ENCODE measurements at regions of chr12 and their contacts with region 1.

Region 1: DNA sequence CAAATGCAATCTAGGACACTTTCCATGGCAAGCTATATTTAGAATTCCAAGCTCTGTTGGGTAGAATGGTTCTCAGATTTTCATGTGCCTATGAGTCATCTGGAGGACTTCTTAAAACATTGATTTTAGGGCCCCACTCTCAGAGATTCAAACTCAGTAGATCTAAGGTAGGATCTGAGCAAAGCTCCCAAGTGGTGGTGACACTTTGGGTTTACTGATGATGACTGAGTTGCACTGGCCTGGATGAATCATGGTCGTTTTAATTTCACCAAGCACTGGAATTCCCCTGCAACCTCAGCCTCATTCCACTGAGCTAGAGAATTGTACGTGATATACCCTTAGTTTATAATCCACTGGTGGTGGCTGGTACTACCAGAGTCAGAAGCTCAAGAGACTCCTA is 86.5 kb downstream of the PPM1H start:
- DNase-seq: peak; percentile 85
- ATAC-seq: peak; percentile 88
- H3K4me3 ChIP-seq: no peak overlapping the region
- H3K27ac ChIP-seq: no peak overlapping the region
- H3K4me1 ChIP-seq: peaks cover 4% of the 10 kb centered on the region; the same call in 1 of the 2 replicates
- H3K27me3 ChIP-seq: no peaks in the 10 kb centered on the region; the same call in 1 of the 2 replicates
- CTCF ChIP-seq: peak; percentile 13; the same call in 1 of the 2 replicates
- POLR2A ChIP-seq: no peak
- RAD21 ChIP-seq: no peak

Region 2: GRCh38 chr12:64099397-64099796 is 1251.0 kb after region 1 on chr12:
- CTCF ChIA-PET with region 1: no interaction called
- POLR2A ChIA-PET with region 1: interaction called, 11 read pairs
- dilution Hi-C with region 1: no loop called
- in situ Hi-C with region 1: no loop called
- intact Hi-C with region 1: no loop called
- DNase-seq: peak; percentile 96
- ATAC-seq: peak; percentile 85
- H3K4me3 ChIP-seq: no peak overlapping the region
- H3K27ac ChIP-seq: peak overlapping the region; percentile 64
- H3K4me1 ChIP-seq: peaks cover 17% of the 10 kb centered on the region
- H3K27me3 ChIP-seq: no peaks in the 10 kb centered on the region
- CTCF ChIP-seq: no peak
- POLR2A ChIP-seq: no peak
- RAD21 ChIP-seq: no peak; the same call in 1 of the 2 replicates